ENCODE measurements at regions of chr7 and their contacts with region 1.

Region 1: GRCh38 chr7:100489824-100490223 is 6.1 kb downstream of the NYAP1 start:
- DNase-seq: peak; percentile 85
- ATAC-seq: peak; percentile 63
- H3K4me3 Mint-ChIP-seq: no peak overlapping the region
- H3K27ac Mint-ChIP-seq: no peak overlapping the region
- H3K4me1 Mint-ChIP-seq: peaks cover 36% of the 10 kb centered on the region
- H3K27me3 Mint-ChIP-seq: peaks cover 17% of the 10 kb centered on the region
- CTCF ChIP-seq: no peak

Region 2: DNA sequence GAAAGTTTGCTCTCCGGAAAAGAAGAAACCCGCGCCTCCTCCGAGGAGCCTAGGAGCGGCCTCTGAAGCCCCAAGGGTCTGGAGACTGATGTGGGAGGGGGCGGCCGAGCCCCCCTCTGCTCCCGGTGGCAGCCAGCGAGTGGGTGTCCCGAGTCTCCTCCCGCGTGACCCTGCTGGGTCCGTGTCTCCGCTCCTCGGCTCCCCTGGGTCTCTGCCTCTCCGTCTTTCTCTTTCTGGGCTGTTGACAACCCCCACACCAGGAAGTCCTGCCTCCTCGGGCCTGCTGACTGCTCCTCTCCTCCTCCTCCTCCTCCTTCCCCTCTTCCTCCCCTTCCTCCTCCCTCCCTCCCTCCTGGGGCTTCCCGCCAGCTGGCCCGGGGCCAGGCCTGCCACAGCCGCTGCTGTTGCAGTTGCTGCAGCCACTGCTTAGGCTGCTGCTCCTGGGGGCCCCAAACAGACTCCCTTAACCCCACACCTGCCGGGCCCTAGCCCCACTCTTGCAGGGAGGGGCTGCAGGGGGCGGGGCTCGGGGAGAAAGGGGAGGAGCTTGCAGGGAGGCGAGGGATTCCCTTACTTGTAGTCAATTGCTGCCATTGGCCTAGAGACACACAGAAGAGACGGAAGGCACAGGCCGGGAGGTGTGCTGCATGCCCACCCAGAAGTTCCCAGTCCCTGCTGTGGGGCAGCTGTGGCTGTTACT is 10.7 kb before region 1 on chr7 and contains the start of gene TSC22D4:
- CTCF ChIA-PET with region 1: interaction called, 21 read pairs
- POLR2A ChIA-PET with region 1: interaction called, 3 read pairs
- DNase-seq: peak; percentile 96
- ATAC-seq: peak; percentile 70
- H3K4me3 Mint-ChIP-seq: peak within 1 kb of the TSS; percentile 78
- H3K27ac Mint-ChIP-seq: peak within 1 kb of the TSS; percentile 92
- H3K4me1 Mint-ChIP-seq: peaks cover 20% of the 10 kb centered on the region
- H3K27me3 Mint-ChIP-seq: no peaks in the 10 kb centered on the region
- CTCF ChIP-seq: no peak
- total RNA-seq, gene TSC22D4: 27.5 to 34.5 TPM (median 29.7 TPM) in 3 replicates

Measured in WTC11 (cell line).